Right lobe of liver (tissue), 6 donors: ENCODE measurements at regions of chr3 and their contacts with region 1.

Region 1: GRCh38 chr3:186849374-186849975 is 7.0 kb downstream of the ADIPOQ start:
- DNase-seq: no peak
- ATAC-seq: peak; percentile 79 to 91 (median 84)
- H3K4me3 ChIP-seq: no peak overlapping the region
- H3K27ac ChIP-seq: no peak overlapping the region
- H3K4me1 ChIP-seq: peaks cover 0 to 2% (median 0%) of the 10 kb centered on the region in 4 donors
- H3K27me3 ChIP-seq: no peaks in the 10 kb centered on the region
- CTCF ChIP-seq: peak; percentile 56 to 59 (median 58)
- POLR2A ChIP-seq: no peak

Region 2: GRCh38 chr3:186783073-186783730 is 66.3 kb before region 1 on chr3 and contains the start of gene EIF4A2:
- intact Hi-C with region 1: no loop called
- DNase-seq: peak; percentile 90 to 93 (median 93)
- ATAC-seq: peak; percentile 88 to 94 (median 91)
- H3K4me3 ChIP-seq: peak within 1 kb of the TSS; percentile 78 to 93 (median 80)
- H3K27ac ChIP-seq: peak within 1 kb of the TSS; percentile 96 to 98 (median 97)
- H3K4me1 ChIP-seq: peaks cover 0 to 33% (median 10%) of the 10 kb centered on the region in 4 donors
- H3K27me3 ChIP-seq: no peaks in the 10 kb centered on the region
- CTCF ChIP-seq: no peak
- POLR2A ChIP-seq: peak; percentile 91
- total RNA-seq, gene EIF4A2: 98.9 to 234 (median 131) TPM

Region 3: DNA sequence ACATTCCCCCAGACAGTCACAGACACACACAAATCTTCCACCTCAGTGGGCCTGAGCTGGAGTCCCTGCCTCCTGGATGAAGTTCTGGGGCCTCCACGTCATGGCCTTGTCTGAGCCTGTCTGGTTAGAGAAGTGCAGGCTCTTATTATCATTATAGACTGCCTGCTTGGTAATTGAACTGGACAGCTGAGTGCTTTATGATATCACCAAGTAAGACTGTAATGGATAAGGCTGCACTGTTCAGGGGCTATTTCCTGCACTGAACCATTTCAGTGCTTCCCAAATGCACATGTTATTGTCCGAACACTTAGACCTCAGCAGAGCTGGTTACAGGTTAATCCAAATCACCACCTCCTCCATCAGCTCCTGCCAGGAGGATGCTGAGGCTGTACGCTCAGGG is 72.1 kb after region 1 on chr3:
- intact Hi-C with region 1: loop called in 1 of 2 experiments (anchors 10 kb)
- DNase-seq: no peak
- ATAC-seq: no peak
- H3K4me3 ChIP-seq: no peak overlapping the region
- H3K27ac ChIP-seq: no peak overlapping the region
- H3K4me1 ChIP-seq: no peaks in the 10 kb centered on the region
- H3K27me3 ChIP-seq: no peaks in the 10 kb centered on the region
- CTCF ChIP-seq: no peak
- POLR2A ChIP-seq: no peak